Activated CD4-positive, alpha-beta T cell treated with anti-CD3 and anti-CD28 coated beads, Interleukin-2, amount 10 ng/mL, durations not matched to agents 24 days and 14 days (primary cell): ENCODE measurements at regions of chr10 and their contacts with region 1.

Region 1: DNA sequence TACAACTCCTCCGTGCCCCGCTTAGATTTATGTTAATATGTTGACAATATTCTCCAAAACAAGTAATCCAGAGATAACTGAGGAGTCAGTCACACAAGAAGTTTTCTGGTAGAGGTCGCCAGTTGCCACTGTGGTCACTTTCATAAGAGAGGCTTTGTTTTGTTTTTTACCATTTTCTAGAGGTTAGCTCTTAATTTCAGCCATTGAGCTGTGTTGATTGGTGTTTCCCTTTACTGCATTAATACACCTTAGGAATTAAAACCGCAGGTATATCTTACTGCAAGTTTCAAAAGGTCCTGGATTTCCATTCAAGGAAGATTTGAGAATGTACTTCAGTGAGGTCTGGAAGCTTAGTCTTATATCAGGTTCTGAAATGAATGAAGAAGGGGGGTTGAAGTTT is 3.5 kb downstream of the BMI1 start:
- DNase-seq: no peak
- H3K4me3 Mint-ChIP-seq: peak overlapping the region; percentile 88
- H3K27ac Mint-ChIP-seq: peak overlapping the region; percentile 78
- H3K4me1 Mint-ChIP-seq: peaks cover 38% of the 10 kb centered on the region
- H3K27me3 Mint-ChIP-seq: peaks cover 34% of the 10 kb centered on the region

Region 2: GRCh38 chr10:22285130-22285529 is 39.3 kb before region 1 on chr10:
- intact Hi-C with region 1: no loop called
- DNase-seq: no peak
- H3K4me3 Mint-ChIP-seq: no peak overlapping the region
- H3K27ac Mint-ChIP-seq: no peak overlapping the region
- H3K4me1 Mint-ChIP-seq: no peaks in the 10 kb centered on the region
- H3K27me3 Mint-ChIP-seq: peaks cover 12% of the 10 kb centered on the region

Region 3: DNA sequence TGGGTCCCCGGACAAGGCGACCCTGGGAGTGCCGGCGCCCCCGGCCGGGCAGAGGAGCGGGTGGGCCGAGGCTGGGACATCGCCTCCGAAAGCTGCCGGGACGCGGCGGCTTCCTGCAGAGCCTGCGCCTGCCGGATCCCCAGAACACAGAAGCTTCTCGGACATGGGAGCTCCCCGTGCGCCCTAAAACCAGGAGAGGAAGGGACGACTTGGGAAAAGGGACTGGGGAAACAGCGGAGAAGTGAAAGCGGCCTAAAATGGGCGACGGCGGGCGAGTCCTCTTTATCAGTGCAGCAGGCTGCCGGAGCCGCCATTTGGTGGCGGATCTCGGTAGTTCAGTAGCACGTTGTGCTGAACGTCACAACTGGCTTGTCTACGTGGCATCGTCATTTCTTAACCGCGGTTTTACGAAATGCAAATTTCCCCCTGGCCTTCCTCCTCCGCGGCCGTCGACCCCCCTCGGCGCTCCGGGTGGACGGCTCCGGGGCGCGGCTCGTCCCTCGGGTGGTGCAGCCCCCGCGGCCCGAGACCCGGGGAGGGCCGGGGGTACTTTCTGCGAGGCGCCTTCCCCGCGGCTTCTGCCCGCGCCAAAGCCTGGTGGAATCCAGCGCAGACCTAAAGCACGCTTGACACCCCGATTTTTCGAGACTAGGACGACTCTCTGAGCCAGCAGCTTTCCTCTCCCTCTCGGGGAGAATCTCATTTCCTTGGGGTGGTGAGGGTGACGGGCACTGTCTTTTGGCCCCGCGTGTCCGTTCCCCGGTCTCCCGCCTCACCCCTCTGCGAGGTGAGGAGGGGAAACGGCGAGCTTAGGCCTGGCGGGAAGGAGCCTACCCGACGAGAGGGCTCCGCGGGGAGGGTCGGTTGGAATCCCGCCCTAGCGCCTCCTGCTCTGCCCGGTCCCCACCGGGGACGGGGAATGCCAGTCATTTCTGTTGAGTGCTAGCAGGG is 11.0 kb after region 1 on chr10:
- intact Hi-C with region 1: loop called (anchors 1 kb)
- DNase-seq: peak; percentile 89
- H3K4me3 Mint-ChIP-seq: peak overlapping the region; percentile 81
- H3K27ac Mint-ChIP-seq: peak overlapping the region; percentile 83
- H3K4me1 Mint-ChIP-seq: peaks cover 42% of the 10 kb centered on the region
- H3K27me3 Mint-ChIP-seq: peaks cover 36% of the 10 kb centered on the region

Region 4: DNA sequence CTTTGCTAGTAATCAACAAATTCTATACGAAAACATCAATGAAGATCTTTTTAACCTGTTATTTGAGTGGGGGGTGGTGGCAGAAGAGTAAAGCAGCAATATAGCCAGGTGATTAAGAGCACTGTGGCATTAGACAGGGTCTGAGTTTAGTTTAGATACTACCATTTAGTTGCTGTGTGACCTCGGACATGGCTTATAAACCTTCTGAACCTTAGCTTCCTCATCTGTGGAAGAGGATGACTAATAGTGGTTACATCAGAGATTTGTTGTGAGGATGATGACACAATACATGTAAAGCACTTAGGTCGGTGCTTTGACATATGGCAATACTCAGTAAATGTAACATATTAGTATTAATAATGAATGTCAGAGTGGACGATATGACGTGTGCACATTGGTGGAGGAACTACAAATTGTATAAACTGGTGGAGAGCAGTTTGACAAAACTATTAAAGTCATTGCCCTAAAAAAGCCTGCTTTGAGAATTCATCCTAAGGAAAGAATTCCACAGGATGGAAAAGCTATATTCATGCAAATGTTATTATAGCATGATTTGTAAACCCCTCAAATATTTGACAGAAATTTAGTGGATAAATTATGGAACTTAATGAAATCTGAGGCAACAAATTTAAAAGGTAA is 45.1 kb after region 1 on chr10:
- intact Hi-C with region 1: no loop called
- DNase-seq: no peak
- H3K4me3 Mint-ChIP-seq: no peak overlapping the region
- H3K27ac Mint-ChIP-seq: no peak overlapping the region
- H3K4me1 Mint-ChIP-seq: peaks cover 34% of the 10 kb centered on the region
- H3K27me3 Mint-ChIP-seq: peaks cover under 1% of the 10 kb centered on the region